Posterior cingulate gyrus (tissue), 11 donors: ENCODE measurements at regions of chr1 and their contacts with region 1.

Region 1: DNA sequence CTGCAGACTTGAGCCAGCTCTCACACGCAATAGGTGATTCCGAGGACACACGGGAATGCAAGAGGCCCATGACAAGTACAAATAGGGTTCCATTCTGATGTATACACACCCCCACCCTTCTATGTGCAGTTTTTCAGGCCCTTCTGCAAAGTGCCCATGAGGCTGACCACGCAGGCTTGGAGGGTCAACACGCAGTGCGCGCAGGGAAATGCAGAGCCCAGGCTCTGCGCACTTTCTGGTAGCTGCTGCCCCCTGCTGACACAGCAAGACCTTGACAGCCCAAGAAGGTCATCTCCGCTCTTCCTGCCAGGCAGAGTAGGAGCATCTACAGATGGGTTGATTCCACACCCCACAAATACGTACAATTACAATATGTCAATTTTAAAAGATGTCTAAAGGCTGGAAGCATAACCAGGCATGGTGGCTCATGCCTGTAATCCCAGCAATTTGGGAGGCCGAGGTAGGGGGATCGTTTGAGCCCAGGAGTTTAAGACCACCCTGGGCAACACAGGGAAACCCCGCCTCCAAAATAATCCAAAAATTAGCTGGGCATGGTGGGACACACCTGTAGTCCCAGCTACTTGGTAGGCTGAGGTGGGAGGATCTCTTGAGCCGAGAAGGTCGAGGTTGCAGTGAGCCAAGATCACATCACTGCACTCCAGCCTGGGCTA is 18.5 kb downstream of the SH3BP5L start:
- DNase-seq: peak; percentile 38 to 97 (median 72)

Region 2: GRCh38 chr1:248243204-248243603 is 564.0 kb before region 1 on chr1:
- intact Hi-C with region 1: loop called (anchors 5 kb)
- DNase-seq: peak in 7 of 10 donors; percentile 9 to 89 (median 57)

Region 3: GRCh38 chr1:248622570-248623001 is 184.6 kb before region 1 on chr1:
- intact Hi-C with region 1: loop called (anchors 1 kb)
- DNase-seq: no peak

Region 4: DNA sequence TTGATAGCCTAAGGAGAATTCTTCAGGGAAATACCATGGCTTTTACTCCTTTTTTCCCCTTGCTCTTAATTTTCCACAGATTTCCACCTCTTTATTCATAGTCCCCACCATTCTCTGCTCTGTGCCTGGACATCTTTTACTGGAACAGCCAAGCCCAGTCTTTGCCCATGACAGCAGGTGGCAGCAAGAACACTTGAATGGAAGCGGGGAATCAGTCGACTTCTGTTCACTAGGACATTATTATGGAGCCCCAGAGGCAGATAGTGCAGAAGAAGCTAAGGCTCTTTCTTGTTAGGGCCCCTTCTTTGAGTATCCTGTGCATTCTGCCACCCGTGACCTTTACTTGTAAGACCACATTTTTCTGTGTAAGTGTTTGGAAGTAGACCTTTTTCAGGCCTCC is 110.9 kb before region 1 on chr1:
- intact Hi-C with region 1: loop called (anchors 2 kb)
- DNase-seq: peak in 3 of 10 donors; percentile 9 to 87 (median 16)